ENCODE measurements at regions of chr7 and their contacts with region 1.

Region 1: DNA sequence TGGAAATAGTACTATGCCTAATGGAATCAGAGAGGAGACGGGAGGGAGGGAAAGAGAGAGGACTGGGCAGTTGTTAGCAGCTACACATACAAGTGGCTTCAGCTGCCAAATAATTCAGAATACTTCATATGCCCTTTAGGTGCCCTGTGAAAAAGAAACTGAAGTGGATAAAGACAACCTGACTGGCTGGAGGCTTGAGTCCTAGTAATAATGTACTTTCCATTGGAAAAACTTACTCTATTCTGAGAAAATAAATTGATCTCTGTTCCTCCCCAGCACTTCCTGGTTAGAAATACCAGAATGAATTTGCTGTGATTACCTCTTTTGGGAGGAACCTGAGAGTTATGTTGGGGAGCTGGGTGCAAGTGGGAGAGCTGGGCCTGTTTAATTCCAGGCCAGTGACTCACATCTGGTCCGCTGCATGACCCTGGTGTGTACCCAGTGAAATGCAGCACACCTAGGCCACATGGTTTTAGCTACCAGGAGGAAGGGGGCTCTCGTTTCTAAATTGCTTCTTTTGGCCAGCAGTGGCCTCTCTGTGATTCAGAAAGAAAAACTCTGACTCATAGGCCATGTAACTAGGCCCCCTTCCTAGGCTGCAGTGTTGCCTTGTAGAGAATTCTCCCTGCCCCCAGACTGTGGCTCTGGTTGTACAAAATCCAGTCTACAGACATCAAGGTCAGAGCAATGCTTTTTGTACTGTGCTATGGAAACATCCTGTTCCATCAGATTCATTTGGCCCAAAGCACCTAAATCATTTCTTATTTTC is 6.5 kb downstream of the AGFG2 start:
- DNase-seq: peak; percentile 76
- H3K4me3 Mint-ChIP-seq: peak overlapping the region; percentile 59
- H3K27ac Mint-ChIP-seq: peak overlapping the region; percentile 95
- H3K4me1 Mint-ChIP-seq: peaks cover 94% of the 10 kb centered on the region
- H3K27me3 Mint-ChIP-seq: no peaks in the 10 kb centered on the region

Region 2: DNA sequence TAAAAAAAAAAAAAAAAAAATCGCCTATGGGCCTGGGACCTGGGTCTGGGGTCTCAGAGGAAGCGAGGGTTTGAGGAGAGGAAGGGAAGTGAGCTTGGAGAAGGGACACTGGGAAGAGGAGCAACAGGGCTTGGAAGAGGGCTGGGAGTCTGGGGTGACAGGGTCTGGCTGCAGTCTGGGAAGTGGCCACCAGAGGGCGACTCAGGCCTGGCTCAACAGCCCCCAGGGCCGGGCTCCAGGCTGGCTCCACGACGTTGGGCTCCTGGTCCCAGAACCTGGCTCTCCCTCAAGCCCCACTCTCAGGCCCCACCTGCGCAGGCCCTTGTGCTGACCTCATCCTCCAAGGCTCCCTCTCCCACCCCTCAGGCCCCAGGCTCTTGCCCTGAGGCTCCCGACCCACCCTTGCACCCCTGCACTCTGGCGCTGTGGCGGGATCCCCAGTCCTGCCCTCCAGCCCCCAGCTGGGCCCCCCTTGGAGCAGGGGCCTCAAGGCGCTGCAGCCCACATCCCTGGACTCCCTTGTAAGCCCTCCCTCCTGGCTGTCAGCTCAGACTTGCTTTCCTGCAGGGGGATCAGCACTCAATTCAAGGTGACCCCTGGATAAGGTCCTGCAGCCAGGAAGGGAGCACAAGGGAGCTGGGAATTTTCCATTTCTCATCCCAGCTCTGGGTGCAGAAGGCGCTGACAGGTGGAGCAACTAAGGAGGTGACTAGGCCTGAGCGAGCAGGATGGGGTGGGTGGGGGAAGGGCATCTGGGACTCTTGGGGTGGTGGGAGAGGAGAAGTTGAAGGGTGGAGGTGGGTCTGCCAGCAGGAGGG is 76.1 kb before region 1 on chr7:
- CTCF ChIA-PET with region 1: interaction called, 11 read pairs
- intact Hi-C with region 1: no loop called
- DNase-seq: peak; percentile 88
- H3K4me3 Mint-ChIP-seq: no peak overlapping the region
- H3K27ac Mint-ChIP-seq: peak overlapping the region; percentile 13
- H3K4me1 Mint-ChIP-seq: peaks cover 29% of the 10 kb centered on the region
- H3K27me3 Mint-ChIP-seq: no peaks in the 10 kb centered on the region

Region 3: DNA sequence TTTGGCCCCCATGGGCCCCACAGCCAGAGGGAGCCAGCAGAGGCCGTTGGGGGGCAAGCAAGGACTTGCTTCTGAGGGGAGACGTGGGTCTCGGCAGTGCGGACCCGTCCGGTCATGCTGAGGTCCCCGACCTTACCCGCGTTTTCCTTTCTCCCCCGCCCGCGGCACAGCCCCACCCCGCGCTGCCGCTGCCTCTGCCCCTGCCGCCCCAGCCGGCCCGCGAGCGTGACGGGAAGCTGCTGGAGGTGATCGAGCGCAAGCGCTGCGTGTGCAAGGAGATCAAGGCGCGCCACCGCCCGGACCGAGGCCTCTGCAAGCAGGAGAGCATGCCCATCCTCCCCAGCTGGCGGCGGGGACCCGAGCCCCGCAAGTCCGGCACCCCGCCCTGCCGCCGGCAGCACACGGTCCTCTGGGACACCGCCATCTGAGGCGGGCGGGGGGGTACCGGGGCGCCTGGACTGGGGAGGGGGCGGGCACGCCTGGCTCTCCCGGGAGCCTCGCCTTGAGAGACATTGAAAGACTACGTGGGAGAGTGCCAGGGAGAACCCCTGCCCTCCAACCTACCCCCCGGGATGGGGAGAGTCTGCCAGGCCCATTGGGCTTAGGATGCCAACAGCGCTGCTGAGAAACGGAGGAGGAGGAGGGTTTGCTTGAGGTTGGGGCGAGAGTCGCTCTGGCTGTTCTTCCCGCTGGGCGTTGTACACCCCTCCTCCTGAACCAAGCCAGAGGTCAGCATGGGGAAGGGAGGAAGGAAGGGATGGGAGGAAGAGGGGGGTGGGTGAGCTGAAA is 51.9 kb before region 1 on chr7:
- CTCF ChIA-PET with region 1: interaction called, 5 read pairs
- intact Hi-C with region 1: loop called (anchors 1 kb)
- DNase-seq: peak; percentile 77
- H3K4me3 Mint-ChIP-seq: peak overlapping the region; percentile 60
- H3K27ac Mint-ChIP-seq: no peak overlapping the region
- H3K4me1 Mint-ChIP-seq: peaks cover 11% of the 10 kb centered on the region
- H3K27me3 Mint-ChIP-seq: peaks cover 2% of the 10 kb centered on the region

Region 4: DNA sequence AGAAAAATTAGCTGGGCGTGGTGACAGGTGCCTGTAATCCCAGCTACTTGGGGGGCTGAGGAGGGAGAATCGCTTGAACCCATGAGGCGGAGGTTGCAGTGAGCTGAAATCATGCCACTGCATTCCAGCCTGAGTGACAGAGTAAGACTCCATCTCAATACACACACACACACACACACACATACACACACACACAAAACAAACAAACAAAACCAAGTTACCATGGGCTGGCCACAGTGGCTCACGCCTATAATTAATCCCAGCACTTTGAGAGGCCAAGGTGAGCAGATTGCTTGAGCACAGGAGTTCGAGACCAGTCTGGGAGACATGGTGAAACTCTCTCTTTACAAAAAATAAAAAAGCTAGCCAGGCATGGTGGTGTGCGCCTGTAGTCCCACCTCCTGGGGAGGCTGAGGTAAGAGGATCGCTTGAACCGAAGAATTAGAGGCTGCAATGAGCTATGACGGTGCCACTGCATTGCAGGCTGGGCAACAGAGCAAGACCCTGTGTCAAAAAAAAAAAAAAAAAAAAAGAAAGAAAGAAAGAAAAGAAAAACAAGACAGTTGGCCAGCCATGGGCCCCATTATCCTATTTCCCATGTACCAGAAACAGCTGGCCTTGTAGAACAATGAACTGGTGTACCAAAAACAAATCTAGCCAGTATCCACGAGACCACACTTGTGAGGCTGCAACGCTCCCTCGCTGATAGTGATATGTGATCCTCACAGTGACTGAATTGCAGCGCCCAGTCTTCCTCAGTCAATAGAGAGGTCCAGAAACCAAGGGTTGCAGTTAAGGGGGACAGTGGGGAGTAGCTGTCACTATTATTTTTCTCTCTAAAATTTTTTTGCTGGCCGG is 13.2 kb before region 1 on chr7:
- CTCF ChIA-PET with region 1: interaction called, 5 read pairs
- intact Hi-C with region 1: loop called (anchors 1 kb)
- DNase-seq: no peak
- H3K4me3 Mint-ChIP-seq: no peak overlapping the region
- H3K27ac Mint-ChIP-seq: no peak overlapping the region
- H3K4me1 Mint-ChIP-seq: peaks cover 8% of the 10 kb centered on the region
- H3K27me3 Mint-ChIP-seq: no peaks in the 10 kb centered on the region

Region 5: GRCh38 chr7:100556541-100556940 is 11.0 kb after region 1 on chr7:
- CTCF ChIA-PET with region 1: interaction called, 82 read pairs
- intact Hi-C with region 1: loop called (anchors 1 kb)
- DNase-seq: no peak
- H3K4me3 Mint-ChIP-seq: no peak overlapping the region
- H3K27ac Mint-ChIP-seq: no peak overlapping the region
- H3K4me1 Mint-ChIP-seq: peaks cover 9% of the 10 kb centered on the region
- H3K27me3 Mint-ChIP-seq: no peaks in the 10 kb centered on the region

Region 6: GRCh38 chr7:100563809-100564400 is 18.4 kb after region 1 on chr7:
- CTCF ChIA-PET with region 1: interaction called, 82 read pairs
- intact Hi-C with region 1: loop called (anchors 1 kb)
- DNase-seq: peak; percentile 90
- H3K4me3 Mint-ChIP-seq: no peak overlapping the region
- H3K27ac Mint-ChIP-seq: no peak overlapping the region
- H3K4me1 Mint-ChIP-seq: peaks cover 15% of the 10 kb centered on the region
- H3K27me3 Mint-ChIP-seq: no peaks in the 10 kb centered on the region

Measured in activated naive CD4-positive, alpha-beta T cell treated with anti-CD3 and anti-CD28 coated beads for 36 hours (primary cell).